Pancreas (tissue), 10 donors: ENCODE measurements at regions of chr1 and their contacts with region 1.

Region 1: GRCh38 chr1:218330043-218330623 is 15.0 kb upstream of the TGFB2 start:
- DNase-seq: no peak
- ATAC-seq: peak; percentile 38 to 83 (median 80)
- H3K4me3 ChIP-seq: no peak overlapping the region
- H3K27ac ChIP-seq: no peak overlapping the region
- H3K4me1 ChIP-seq: no peaks in the 10 kb centered on the region
- H3K27me3 ChIP-seq: no peaks in the 10 kb centered on the region
- CTCF ChIP-seq: peak in 3 of 4 donors; percentile 30 to 54 (median 43)

Region 2: DNA sequence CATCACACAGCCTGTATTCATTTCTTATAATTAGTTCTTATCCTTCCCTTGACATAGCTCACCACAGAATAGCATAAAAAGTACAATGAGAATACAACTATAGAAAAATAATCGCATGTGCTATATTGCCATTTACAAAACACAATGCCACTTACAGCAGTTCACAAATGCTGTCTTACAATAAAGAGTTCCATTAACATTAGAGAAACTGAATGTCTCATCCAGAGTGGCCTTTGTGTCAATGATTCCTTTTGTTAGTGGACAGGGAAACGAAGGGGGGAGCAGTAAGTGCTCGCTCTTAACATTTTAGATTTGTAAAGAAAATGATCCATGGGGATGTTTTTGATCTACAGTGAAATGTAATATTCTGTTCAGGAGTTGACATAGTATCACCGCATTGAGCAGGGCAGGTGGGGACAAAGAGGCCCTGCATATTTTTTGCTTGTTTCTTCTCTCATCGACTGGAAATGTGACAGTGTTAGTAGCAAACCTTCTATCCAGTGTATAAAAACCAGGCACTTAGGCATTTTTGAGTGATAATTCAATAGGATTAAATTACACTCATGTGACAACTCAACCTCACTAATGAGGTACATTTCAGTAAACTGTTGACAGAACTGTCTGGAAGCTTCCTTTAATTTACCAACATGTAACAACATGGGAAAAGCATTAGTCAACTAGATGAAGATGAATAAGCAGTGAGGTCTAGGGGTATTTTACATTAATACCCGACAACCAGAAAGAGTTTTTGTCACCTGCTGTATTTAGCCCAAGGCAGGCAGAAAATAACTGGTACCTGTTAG is 80.6 kb before region 1 on chr1:
- intact Hi-C with region 1: no loop called
- DNase-seq: no peak
- ATAC-seq: no peak
- H3K4me3 ChIP-seq: no peak overlapping the region
- H3K27ac ChIP-seq: no peak overlapping the region
- H3K4me1 ChIP-seq: no peaks in the 10 kb centered on the region
- H3K27me3 ChIP-seq: peaks cover 0 to 6% (median 0%) of the 10 kb centered on the region in 4 donors
- CTCF ChIP-seq: no peak

Region 3: DNA sequence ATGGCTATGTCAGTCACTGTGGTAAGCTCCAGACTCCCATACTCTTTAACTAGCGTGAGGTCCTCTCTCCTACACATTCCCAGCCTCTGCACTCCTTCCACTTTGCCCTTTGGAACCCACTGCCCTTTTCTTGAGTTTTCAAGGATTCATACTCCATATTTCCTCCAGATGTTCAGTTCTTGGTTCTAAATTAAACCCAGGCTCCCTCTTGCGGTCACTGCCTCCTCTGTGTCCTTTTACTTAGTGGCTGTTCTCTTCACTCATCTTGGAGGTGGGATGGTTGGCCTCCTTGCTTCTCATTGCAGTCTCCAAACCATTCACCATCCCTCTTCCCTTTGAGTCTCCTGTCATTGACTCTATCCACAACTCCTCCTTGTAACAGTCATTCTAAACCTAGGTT is 223.1 kb after region 1 on chr1:
- intact Hi-C with region 1: no loop called
- DNase-seq: no peak
- ATAC-seq: no peak
- H3K4me3 ChIP-seq: no peak overlapping the region
- H3K27ac ChIP-seq: no peak overlapping the region
- H3K4me1 ChIP-seq: no peaks in the 10 kb centered on the region
- H3K27me3 ChIP-seq: no peaks in the 10 kb centered on the region
- CTCF ChIP-seq: no peak

Region 4: GRCh38 chr1:219075121-219075879 is 745.2 kb after region 1 on chr1:
- intact Hi-C with region 1: loop called in 1 of 3 experiments (anchors 10 kb)
- DNase-seq: no peak
- ATAC-seq: peak in 2 of 4 donors; percentile 45 to 49
- H3K4me3 ChIP-seq: no peak overlapping the region
- H3K27ac ChIP-seq: no peak overlapping the region
- H3K4me1 ChIP-seq: peaks cover 4 to 18% (median 17%) of the 10 kb centered on the region in 3 donors
- H3K27me3 ChIP-seq: no peaks in the 10 kb centered on the region
- CTCF ChIP-seq: no peak

Region 5: GRCh38 chr1:219812491-219813203 is 1482.5 kb after region 1 on chr1:
- intact Hi-C with region 1: loop called in 1 of 3 experiments (anchors 10 kb)
- DNase-seq: peak in 3 of 6 donors; percentile 19 to 49 (median 29)
- ATAC-seq: peak; percentile 73 to 99 (median 96)
- H3K4me3 ChIP-seq: no peak overlapping the region
- H3K27ac ChIP-seq: no peak overlapping the region
- H3K4me1 ChIP-seq: no peaks in the 10 kb centered on the region
- H3K27me3 ChIP-seq: peaks cover 0 to 5% (median 0%) of the 10 kb centered on the region in 4 donors
- CTCF ChIP-seq: peak; percentile 38 to 64 (median 60)